Ovary (tissue), 10 donors: ENCODE measurements at regions of chr21 and their contacts with region 1.

Region 1: GRCh38 chr21:45554477-45555175 is 12.4 kb upstream of the SLC19A1 start:
- DNase-seq: peak; percentile 82 to 95 (median 90)
- H3K4me3 ChIP-seq: peak overlapping the region; percentile 66
- H3K27ac ChIP-seq: peak overlapping the region; percentile 27 to 66
- H3K4me1 ChIP-seq: peaks cover 4% of the 10 kb centered on the region
- H3K27me3 ChIP-seq: no peaks in the 10 kb centered on the region
- CTCF ChIP-seq: peak; percentile 53 to 91 (median 91)
- EP300 ChIP-seq: no peak
- POLR2A ChIP-seq: peak; percentile 28

Region 2: DNA sequence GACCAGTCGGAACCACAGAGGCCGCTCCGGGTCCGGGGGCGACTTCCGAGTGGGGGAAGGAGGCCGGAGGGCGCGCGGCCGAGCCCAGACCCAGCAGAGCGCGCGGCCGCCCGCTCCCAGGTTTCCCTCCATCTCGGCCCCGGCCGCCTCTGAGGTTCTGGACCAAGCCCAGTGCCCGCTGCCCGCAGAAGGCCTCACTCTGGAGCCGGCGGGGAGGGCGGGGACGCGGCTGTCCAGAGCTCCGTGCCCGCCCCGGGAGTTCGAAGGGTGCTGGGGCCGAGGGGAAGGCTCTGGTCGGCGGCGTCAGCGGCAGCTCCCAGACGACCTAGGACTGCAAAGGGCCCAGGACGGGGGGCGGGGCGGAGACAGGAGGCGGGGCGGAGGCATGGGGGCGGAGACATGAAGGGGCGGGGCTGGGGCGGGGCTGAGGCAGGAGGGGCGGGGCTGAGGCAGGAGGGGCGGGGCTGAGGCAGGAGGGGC is 35.7 kb after region 1 on chr21:
- intact Hi-C with region 1: loop called in 2 of 4 experiments (anchors 2 to 5 kb)
- DNase-seq: peak; percentile 76 to 85 (median 82)
- H3K4me3 ChIP-seq: peak overlapping the region; percentile 42
- H3K27ac ChIP-seq: no peak overlapping the region
- H3K4me1 ChIP-seq: peaks cover 3% of the 10 kb centered on the region
- H3K27me3 ChIP-seq: no peaks in the 10 kb centered on the region
- CTCF ChIP-seq: no peak
- EP300 ChIP-seq: no peak
- POLR2A ChIP-seq: no peak

Region 3: DNA sequence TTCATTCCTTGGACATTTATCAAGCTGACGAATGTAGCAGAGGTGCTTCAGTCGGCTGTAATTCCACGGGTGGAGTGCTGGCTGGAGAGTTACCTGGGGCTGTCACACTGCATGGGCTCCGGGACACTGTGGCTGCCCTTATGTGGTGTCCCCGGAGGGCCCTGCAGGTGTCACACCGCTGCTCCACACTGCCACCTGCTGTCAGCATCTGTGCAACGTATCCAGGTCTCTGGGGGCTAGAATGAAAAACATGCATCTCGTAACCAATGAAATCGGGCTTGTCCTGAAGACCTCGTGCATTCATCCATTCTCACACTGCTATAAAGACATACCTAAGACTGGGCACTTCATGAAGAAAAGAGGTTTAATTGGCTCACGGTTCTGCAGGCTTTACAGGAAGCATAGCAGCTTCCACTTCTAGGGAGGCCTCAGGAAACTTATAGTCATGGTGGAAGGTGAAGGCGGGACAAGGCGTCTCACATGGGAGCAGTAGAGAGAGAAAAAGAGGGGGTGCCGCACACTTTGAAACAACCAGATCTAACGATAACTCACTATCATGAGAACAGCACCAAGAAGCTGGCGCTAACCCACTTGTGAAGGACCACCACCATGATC is 42.2 kb after region 1 on chr21:
- intact Hi-C with region 1: loop called in 3 of 4 experiments (anchors 2 to 5 kb)
- DNase-seq: peak; percentile 60 to 81 (median 73)
- H3K4me3 ChIP-seq: no peak overlapping the region
- H3K27ac ChIP-seq: no peak overlapping the region
- H3K4me1 ChIP-seq: no peaks in the 10 kb centered on the region
- H3K27me3 ChIP-seq: no peaks in the 10 kb centered on the region
- CTCF ChIP-seq: peak; percentile 59 to 73 (median 65)
- EP300 ChIP-seq: no peak
- POLR2A ChIP-seq: no peak

Region 4: DNA sequence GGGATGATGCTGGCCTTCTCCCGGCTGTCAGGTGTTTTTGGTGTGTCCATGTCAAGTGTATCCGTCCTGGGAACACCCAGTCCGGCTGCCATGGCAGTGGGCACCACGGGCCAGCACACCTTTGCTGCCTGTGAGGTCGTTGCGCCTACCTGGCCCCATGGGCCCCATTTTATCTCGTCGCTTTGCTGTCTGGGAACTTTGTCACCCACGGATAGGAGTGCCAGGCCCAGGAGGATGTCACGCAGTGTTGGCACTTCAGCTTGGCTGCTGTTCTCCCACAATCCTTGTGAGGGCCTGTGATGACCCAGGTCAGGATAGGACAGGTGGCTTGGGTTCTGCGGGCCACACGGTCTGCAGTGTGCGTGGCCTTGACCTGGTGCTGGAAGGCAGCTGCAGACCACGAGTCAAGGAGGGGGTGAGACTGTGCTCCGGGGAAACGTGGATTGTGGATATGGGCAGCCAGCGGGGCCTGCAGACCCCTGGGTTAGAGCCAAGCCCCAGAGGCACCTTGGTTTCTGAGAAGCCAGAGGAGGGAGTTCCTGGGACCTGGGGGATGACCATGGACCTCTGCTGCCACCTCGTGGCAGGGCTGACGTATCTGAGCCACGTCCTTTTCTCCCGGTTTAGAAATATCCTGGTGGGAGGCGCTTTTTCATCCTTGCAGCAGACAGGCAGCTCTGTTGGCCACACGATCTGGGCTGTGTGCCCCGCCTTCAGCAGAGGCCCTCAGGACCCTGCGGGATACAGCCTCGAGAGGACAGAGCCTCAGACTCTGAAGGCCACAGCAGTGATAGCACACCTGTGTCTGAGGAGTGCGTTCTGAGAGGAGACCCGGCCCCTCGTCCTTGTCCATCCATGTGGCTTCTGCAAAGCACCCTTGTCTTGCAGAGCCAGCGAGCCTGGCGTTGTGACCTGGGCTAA is 265.8 kb after region 1 on chr21:
- intact Hi-C with region 1: loop called in 3 of 4 experiments (anchors 5 to 10 kb)
- DNase-seq: peak; percentile 68 to 88 (median 82)
- H3K4me3 ChIP-seq: no peak overlapping the region
- H3K27ac ChIP-seq: no peak overlapping the region
- H3K4me1 ChIP-seq: peaks cover 3% of the 10 kb centered on the region
- H3K27me3 ChIP-seq: no peaks in the 10 kb centered on the region
- CTCF ChIP-seq: peak; percentile 63 to 72 (median 66)
- EP300 ChIP-seq: no peak
- POLR2A ChIP-seq: no peak